Mammary epithelial cell (primary cell): ENCODE measurements at regions of chr21 and their contacts with region 1.

Region 1: GRCh38 chr21:37338671-37339551 is 27.7 kb upstream of the DYRK1A start:
- DNase-seq: peak; percentile 89
- H3K4me3 ChIP-seq: no peak overlapping the region
- H3K27ac ChIP-seq: peak overlapping the region; percentile 88
- H3K4me1 ChIP-seq: peaks cover 36% of the 10 kb centered on the region
- H3K27me3 ChIP-seq: no peaks in the 10 kb centered on the region
- CTCF ChIP-seq: no peak

Region 2: DNA sequence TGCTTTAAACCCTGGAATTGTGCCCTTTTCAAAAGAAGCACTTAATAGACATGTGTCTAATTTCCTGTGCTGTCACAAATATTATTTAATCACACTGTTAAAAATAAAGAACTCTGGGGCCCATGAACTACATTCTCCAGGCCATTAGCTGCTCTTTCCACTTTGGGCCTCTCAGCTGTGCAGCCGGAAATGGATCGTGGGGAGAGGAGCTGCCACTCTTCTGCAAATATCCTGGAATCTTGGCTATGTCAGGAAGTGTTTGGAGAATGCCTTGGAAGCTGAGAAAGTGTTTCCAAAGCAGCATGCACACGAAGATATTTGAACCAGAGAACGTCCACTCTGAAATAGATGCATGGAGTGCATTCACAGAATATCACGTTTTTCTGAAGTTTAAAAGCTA is 44.2 kb before region 1 on chr21:
- CTCF ChIA-PET with region 1: no interaction called
- dilution Hi-C with region 1: no loop called
- in situ Hi-C with region 1: no loop called
- intact Hi-C with region 1: loop called (anchors 1 kb)
- DNase-seq: no peak
- H3K4me3 ChIP-seq: no peak overlapping the region
- H3K27ac ChIP-seq: no peak overlapping the region
- H3K4me1 ChIP-seq: no peaks in the 10 kb centered on the region
- H3K27me3 ChIP-seq: no peaks in the 10 kb centered on the region
- CTCF ChIP-seq: no peak